HEK293 (cell line): ENCODE measurements at regions of chr3 and their contacts with region 1.

Region 1: GRCh38 chr3:141011232-141011996 is 39.7 kb upstream of the SPSB4 start:
- H3K4me3 ChIP-seq: no peak overlapping the region
- H3K27ac ChIP-seq: no peak overlapping the region
- H3K4me1 ChIP-seq: no peaks in the 10 kb centered on the region
- CTCF ChIP-seq: peak; percentile 53

Region 2: GRCh38 chr3:140980628-140981027 is 30.8 kb before region 1 on chr3:
- CTCF ChIA-PET with region 1: no interaction called
- POLR2A ChIA-PET with region 1: no interaction called
- H3K4me3 ChIP-seq: no peak overlapping the region
- H3K27ac ChIP-seq: no peak overlapping the region
- H3K4me1 ChIP-seq: no peaks in the 10 kb centered on the region
- CTCF ChIP-seq: no peak

Region 3: GRCh38 chr3:141000027-141000663 is 11.3 kb before region 1 on chr3:
- CTCF ChIA-PET with region 1: interaction called, 10 read pairs
- POLR2A ChIA-PET with region 1: no interaction called
- H3K4me3 ChIP-seq: no peak overlapping the region
- H3K27ac ChIP-seq: no peak overlapping the region
- H3K4me1 ChIP-seq: no peaks in the 10 kb centered on the region
- CTCF ChIP-seq: peak; percentile 37; the same call in 1 of the 2 replicates

Region 4: GRCh38 chr3:141044695-141045641 is 33.6 kb after region 1 on chr3:
- CTCF ChIA-PET with region 1: interaction called, 10 read pairs
- POLR2A ChIA-PET with region 1: no interaction called
- H3K4me3 ChIP-seq: no peak overlapping the region
- H3K27ac ChIP-seq: no peak overlapping the region
- H3K4me1 ChIP-seq: no peaks in the 10 kb centered on the region
- CTCF ChIP-seq: no peak

Region 5: GRCh38 chr3:141105828-141106628 is 94.6 kb after region 1 on chr3:
- CTCF ChIA-PET with region 1: interaction called, 24 read pairs
- POLR2A ChIA-PET with region 1: no interaction called
- H3K4me3 ChIP-seq: no peak overlapping the region
- H3K27ac ChIP-seq: no peak overlapping the region
- H3K4me1 ChIP-seq: no peaks in the 10 kb centered on the region
- CTCF ChIP-seq: no peak

Region 6: DNA sequence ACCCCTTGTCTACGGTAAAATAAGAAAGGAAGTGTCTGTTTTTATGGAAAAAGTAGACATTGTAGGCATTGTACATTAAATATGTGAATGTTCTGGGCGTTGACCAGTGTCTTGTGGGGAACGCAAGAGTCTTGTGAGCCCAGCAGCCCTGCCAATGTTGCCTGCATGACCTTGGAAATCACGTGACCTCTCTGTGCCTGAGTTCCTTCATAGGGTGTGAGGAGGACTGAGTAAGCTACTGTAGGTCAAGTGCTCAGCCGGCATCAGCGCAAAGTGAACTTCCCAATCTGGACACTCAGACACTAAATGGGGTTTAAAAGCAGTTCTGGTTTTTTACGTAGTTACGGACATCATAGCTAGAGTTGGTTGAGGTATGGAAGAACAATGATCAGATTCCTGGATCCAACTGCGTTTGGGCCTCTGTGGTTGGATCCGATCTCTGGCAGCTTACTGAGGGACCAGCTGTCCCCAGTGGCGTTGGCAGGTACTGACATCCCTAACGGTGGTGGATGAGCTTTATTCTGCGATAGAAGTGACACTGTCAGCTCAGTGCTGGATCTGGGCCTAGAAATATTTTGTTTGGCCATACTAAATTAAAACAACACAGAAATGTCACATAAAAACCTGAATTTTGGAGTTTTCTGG is 103.5 kb after region 1 on chr3:
- CTCF ChIA-PET with region 1: interaction called, 13 read pairs
- POLR2A ChIA-PET with region 1: no interaction called
- H3K4me3 ChIP-seq: no peak overlapping the region
- H3K27ac ChIP-seq: no peak overlapping the region
- H3K4me1 ChIP-seq: no peaks in the 10 kb centered on the region
- CTCF ChIP-seq: no peak; the same call in 1 of the 2 replicates

Region 7: DNA sequence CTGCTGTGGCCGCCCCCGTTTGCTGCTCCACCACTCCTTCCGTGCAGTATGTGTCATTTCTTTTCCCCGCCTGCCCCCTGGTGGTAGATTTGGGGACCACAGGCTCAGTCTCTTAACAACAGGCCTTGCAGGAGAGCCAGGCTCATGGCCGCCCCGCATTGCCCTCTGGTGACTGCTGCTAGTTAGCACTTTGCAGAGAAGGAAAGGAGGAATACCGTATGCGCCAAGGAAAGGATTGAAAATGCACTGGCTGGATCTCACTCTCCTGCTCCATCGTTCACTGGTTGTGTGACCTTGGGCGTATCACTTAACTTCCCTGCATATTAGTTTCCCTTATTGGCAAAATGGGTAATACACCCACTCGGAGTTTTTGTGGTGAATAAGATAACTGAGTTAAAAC is 180.9 kb after region 1 on chr3:
- CTCF ChIA-PET with region 1: interaction called, 12 read pairs
- POLR2A ChIA-PET with region 1: no interaction called
- H3K4me3 ChIP-seq: no peak overlapping the region
- H3K27ac ChIP-seq: no peak overlapping the region
- H3K4me1 ChIP-seq: no peaks in the 10 kb centered on the region
- CTCF ChIP-seq: peak; percentile 91